H1 (cell line): ENCODE measurements at regions of chr15 and their contacts with region 1.

Region 1: DNA sequence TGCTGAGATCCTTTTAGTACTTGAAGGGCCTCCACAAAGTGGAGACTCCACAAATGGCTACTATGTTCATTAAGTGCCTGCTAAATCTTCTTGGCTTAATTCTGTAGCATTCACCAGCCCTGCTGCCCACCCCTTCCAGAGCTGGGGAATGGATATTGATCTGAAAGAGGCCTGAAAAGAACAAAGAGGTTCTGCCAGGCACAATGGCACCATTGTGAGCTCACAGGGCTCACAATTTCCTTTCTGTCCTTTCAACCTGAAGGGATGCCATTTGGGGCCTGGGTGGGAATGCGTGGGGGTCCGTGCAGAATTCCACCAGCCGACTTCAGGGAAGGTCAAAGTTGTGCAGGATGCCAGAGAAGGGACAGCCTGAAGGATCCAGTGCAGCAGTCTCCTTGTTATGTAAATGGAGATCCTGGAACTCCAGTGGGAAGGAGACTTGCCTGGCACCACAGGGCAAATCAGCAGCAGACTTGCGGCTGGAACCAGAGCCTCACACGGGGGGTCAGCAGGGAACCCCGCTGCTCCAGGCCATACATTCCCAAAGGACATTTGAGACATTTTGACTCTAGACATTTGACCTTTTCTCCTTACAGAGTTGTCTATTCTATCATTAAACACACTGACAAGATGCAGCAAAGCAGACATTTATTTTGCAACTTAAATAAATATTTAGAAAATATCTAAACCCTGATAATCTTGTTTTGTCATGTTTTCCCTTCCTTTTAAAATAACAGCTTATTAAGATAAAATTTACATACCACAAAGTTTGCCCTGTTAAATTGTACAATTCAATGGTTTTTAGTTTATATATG is 21.5 kb upstream of the MORF4L1 start:
- DNase-seq: no peak
- H3K4me3 ChIP-seq: no peak overlapping the region
- H3K27ac ChIP-seq: no peak overlapping the region
- H3K4me1 ChIP-seq: peaks cover 3 to 8% (median 5%) of the 10 kb centered on the region in 4 experiments
- H3K27me3 ChIP-seq: no peaks in the 10 kb centered on the region
- CTCF ChIP-seq: no peak
- EP300 ChIP-seq: no peak
- POLR2A ChIP-seq: no peak
- RAD21 ChIP-seq: no peak

Region 2: GRCh38 chr15:78790030-78790429 is 61.1 kb before region 1 on chr15:
- CTCF ChIA-PET with region 1: no interaction called
- POLR2A ChIA-PET with region 1: no interaction called
- DNase-seq: no peak
- H3K4me3 ChIP-seq: no peak overlapping the region
- H3K27ac ChIP-seq: no peak overlapping the region
- H3K4me1 ChIP-seq: no peaks in the 10 kb centered on the region
- H3K27me3 ChIP-seq: no peaks in the 10 kb centered on the region
- CTCF ChIP-seq: no peak
- EP300 ChIP-seq: no peak
- POLR2A ChIP-seq: no peak
- RAD21 ChIP-seq: no peak

Region 3: GRCh38 chr15:78822514-78822913 is 28.6 kb before region 1 on chr15:
- CTCF ChIA-PET with region 1: no interaction called
- POLR2A ChIA-PET with region 1: no interaction called
- DNase-seq: no peak
- H3K4me3 ChIP-seq: no peak overlapping the region
- H3K27ac ChIP-seq: no peak overlapping the region
- H3K4me1 ChIP-seq: no peaks in the 10 kb centered on the region
- H3K27me3 ChIP-seq: no peaks in the 10 kb centered on the region
- CTCF ChIP-seq: no peak
- EP300 ChIP-seq: no peak
- POLR2A ChIP-seq: no peak
- RAD21 ChIP-seq: no peak

Region 4: GRCh38 chr15:78840661-78841375 is 10.3 kb before region 1 on chr15:
- CTCF ChIA-PET with region 1: interaction called, 14 read pairs
- POLR2A ChIA-PET with region 1: interaction called, 4 read pairs
- DNase-seq: no peak
- H3K4me3 ChIP-seq: no peak overlapping the region
- H3K27ac ChIP-seq: no peak overlapping the region
- H3K4me1 ChIP-seq: peaks cover 0 to 3% (median 0%) of the 10 kb centered on the region in 4 experiments; a peak in 1 of 7 replicates
- H3K27me3 ChIP-seq: no peaks in the 10 kb centered on the region
- CTCF ChIP-seq: no peak
- EP300 ChIP-seq: no peak
- POLR2A ChIP-seq: no peak
- RAD21 ChIP-seq: no peak

Region 5: DNA sequence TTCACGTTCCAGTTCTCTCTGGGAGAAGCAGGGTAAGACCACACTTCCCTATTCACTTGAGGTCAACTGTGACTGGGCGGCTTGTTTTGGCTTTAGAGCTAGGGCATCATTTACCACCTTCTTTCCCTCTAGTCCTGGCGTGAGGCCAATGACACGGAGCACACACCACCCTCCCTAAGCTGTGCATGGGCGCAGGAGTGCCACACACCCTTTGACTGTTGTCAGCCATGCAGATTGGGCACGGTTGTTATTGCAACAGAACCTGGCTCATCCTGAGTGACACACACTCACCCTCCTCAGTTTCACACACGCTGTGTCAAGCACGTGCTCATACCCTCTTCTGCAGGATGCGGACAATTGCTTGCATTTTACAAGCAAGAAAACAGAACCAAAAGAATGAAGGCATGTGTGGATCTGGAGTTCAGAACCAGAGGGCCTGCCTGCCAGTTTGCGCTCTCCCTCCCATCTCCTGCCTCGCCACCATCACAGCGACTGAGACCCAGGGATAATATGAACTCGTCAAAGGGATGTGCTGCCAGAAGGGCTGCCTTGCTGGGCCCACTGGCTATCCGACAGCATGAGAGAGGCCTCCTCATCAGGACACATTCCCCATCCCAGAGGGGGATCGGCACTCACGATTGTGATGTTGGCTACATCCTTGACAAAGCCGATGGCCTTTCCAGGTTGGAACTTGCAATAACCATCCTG is 76.1 kb after region 1 on chr15:
- CTCF ChIA-PET with region 1: no interaction called
- POLR2A ChIA-PET with region 1: no interaction called
- DNase-seq: no peak
- H3K4me3 ChIP-seq: no peak overlapping the region
- H3K27ac ChIP-seq: no peak overlapping the region
- H3K4me1 ChIP-seq: no peaks in the 10 kb centered on the region
- H3K27me3 ChIP-seq: no peaks in the 10 kb centered on the region; a peak in 1 of 7 replicates
- CTCF ChIP-seq: no peak
- EP300 ChIP-seq: no peak
- POLR2A ChIP-seq: no peak
- RAD21 ChIP-seq: no peak